Motor neuron (in vitro differentiated cells): ENCODE measurements at regions of chr7 and their contacts with region 1.

Region 1: DNA sequence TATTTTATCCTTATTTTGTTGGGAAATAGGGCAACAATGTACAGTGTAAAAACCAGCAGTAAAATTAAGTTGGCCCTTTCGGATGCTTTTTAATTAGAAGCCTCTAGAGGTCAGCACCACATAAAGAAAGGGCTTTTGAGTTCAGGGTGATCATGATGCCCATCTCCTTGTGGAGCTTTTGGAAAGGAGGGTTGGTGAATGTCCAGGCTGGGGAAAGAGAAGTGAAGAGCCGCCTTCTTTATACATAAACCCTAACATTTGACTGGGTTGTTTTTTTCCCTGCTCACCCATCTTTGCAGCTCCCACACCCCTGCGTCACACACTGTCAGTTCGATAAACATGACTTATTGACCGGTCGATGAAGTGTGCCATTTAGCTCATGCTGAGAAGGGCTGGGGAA is 29.8 kb downstream of the MTURN start:
- ATAC-seq: peak in 4 of 8 experiments; percentile 4 to 37 (median 26)
- H3K4me3 ChIP-seq: no peak overlapping the region
- H3K27ac ChIP-seq: no peak overlapping the region
- H3K4me1 ChIP-seq: peaks cover 43 to 55% of the 10 kb centered on the region in 2 donors

Region 2: GRCh38 chr7:29508608-29509007 is 656.0 kb before region 1 on chr7:
- in situ Hi-C with region 1: no loop called
- ATAC-seq: no peak
- H3K4me3 ChIP-seq: no peak overlapping the region
- H3K27ac ChIP-seq: no peak overlapping the region
- H3K4me1 ChIP-seq: no peaks in the 10 kb centered on the region

Region 3: DNA sequence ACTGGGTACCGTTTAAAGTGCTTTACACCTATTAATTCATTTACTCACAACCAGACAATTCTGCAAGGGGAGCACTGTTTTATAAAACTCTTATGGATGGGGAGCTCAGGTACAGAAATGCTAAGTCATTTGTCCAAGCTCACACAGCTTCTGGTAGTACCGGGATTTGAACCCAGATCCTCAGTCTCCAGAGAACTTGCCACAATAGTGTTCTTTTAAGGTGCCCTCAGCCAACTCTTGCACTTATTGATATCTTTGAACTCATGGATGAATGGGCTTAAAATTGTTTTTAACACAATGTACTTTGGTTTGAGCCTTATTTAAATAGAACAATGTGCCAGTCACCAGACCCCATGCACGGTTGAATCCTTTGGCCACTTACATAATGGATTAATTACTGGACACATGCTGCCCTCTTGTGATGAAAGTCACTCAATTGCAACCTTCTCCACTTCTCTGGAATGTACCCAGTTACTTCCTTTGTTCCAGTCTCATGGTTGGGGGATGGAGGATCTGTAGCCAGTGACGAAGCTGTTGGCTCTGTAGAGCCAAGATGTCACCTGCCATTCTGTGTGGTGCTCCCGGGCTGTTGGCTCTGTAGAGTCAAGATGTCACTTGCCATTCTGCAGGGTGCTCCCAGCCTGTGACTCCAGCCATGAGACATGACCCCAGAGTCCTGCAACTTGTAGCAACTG is 248.4 kb after region 1 on chr7:
- in situ Hi-C with region 1: loop called in 1 of 9 experiments (anchors 25 kb)
- ATAC-seq: peak in 7 of 8 experiments; percentile 50 to 100 (median 79)
- H3K4me3 ChIP-seq: no peak overlapping the region
- H3K27ac ChIP-seq: no peak overlapping the region
- H3K4me1 ChIP-seq: no peaks in the 10 kb centered on the region

Region 4: DNA sequence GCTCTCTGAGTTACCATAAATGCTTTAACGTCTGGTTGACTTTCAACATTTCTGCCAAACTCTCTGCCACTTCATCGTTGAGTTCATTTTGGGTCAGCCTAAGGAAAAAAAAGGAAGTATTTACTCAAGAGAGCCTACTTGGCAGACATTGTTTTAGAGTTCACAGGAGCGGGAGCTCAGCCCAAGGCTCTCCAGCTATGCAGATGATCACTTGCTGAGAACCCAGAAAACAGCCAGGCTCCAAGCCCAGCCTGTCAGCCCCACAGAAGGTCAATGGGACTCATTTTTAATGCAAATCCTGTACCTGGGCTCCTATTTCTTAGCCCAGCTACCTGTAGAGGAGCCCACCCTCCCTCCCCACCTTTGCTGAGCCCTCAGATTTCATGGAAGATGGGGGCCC is 268.5 kb after region 1 on chr7:
- in situ Hi-C with region 1: loop called in 1 of 9 experiments (anchors 10 kb)
- ATAC-seq: peak in 2 of 8 experiments; percentile 34 to 57
- H3K4me3 ChIP-seq: no peak overlapping the region
- H3K27ac ChIP-seq: no peak overlapping the region
- H3K4me1 ChIP-seq: peaks cover 4 to 14% of the 10 kb centered on the region in 2 donors